Right cardiac atrium (tissue), 5 donors: ENCODE measurements at regions of chr6 and their contacts with region 1.

Region 1: GRCh38 chr6:10800829-10801535 is 37.4 kb downstream of the MAK start:
- DNase-seq: peak; percentile 38 to 74 (median 64)
- ATAC-seq: peak; percentile 69 to 77
- H3K4me3 ChIP-seq: no peak overlapping the region
- H3K27ac ChIP-seq: no peak overlapping the region
- H3K4me1 ChIP-seq: no peaks in the 10 kb centered on the region
- H3K27me3 ChIP-seq: no peaks in the 10 kb centered on the region

Region 2: DNA sequence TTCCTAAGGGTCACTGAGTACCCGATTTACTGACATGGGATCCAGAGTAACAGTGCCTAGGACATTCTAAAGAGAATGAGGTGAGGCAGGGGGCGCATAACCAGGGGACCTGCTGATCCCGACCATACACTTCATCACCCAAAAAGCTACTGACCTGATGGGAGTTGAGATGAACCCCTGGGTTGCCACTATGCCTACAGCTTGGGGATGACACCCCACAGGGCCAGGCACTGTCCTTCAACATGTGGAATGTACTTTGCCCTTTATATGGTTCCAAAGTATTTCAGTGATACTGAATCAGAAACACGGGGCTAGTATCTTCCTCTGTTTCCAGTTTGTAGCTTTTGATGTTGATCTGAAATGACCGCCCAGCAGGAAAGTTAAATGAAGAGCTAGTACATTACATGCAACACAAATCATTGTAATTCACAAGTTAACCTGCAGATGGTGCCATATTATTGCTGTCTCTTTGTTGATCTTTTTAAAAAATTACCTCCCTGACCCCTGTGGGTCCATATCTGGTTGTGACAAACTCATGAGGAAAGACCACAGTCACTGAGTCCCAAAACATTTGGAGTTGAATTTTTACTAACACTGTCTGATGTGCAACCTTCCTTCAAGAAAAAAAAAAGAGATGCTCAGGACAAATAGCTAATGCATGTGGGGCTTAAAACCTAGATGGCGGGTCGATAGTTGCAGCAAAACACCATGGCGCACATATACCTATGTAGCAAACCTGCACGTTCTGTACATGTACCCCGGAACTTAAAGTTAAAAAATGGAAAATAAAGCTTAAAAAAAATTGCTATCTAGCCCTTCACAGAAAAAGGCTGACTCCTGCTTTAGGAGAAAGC is 322.6 kb before region 1 on chr6:
- intact Hi-C with region 1: loop called in 1 of 4 experiments (anchors 5 kb)
- DNase-seq: no peak
- ATAC-seq: no peak
- H3K4me3 ChIP-seq: no peak overlapping the region
- H3K27ac ChIP-seq: no peak overlapping the region
- H3K4me1 ChIP-seq: no peaks in the 10 kb centered on the region
- H3K27me3 ChIP-seq: no peaks in the 10 kb centered on the region

Region 3: DNA sequence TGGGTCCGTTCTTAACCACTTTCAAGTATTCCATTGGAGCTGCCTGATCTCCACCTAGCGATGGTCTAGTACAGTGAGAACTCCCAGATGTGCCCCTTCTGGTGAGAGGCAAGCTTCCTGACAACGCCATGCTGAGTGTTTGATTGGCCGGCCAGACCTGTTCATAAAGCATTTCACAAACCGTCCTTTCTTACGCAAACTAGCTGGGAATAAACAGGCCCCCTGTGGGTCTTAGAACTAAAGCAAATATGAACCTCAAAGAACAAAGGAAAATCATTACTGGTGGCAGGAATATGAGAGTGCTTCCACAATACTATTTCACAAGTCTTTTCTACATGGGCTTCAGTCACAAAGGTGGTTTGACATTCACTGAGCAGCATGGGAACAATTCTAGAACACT is 295.5 kb before region 1 on chr6:
- intact Hi-C with region 1: loop called in 1 of 4 experiments (anchors 10 kb)
- DNase-seq: no peak
- ATAC-seq: no peak
- H3K4me3 ChIP-seq: no peak overlapping the region
- H3K27ac ChIP-seq: no peak overlapping the region
- H3K4me1 ChIP-seq: no peaks in the 10 kb centered on the region
- H3K27me3 ChIP-seq: no peaks in the 10 kb centered on the region

Region 4: GRCh38 chr6:10722820-10723566 is 78.0 kb before region 1 on chr6 and contains the start of gene TMEM14C:
- intact Hi-C with region 1: no loop called
- DNase-seq: peak; percentile 99 to 100 (median 100)
- ATAC-seq: peak; percentile 99
- H3K4me3 ChIP-seq: peak within 1 kb of the TSS; percentile 51
- H3K27ac ChIP-seq: peak within 1 kb of the TSS; percentile 91
- H3K4me1 ChIP-seq: peaks cover 3% of the 10 kb centered on the region
- H3K27me3 ChIP-seq: no peaks in the 10 kb centered on the region
- total RNA-seq, gene TMEM14C: 102 to 119 (median 109) TPM